GM12878 (cell line): ENCODE measurements at regions of chr1 and their contacts with region 1.

Region 1: GRCh38 chr1:206489980-206490770 is 17.2 kb upstream of the RASSF5 start:
- DNase-seq: no peak
- ATAC-seq: peak; percentile 99
- H3K4me3 ChIP-seq: no peak overlapping the region
- H3K27ac ChIP-seq: no peak overlapping the region
- H3K4me1 ChIP-seq: peaks cover 5% of the 10 kb centered on the region
- H3K27me3 ChIP-seq: no peaks in the 10 kb centered on the region
- CTCF ChIP-seq: peak; percentile 91 to 97 (median 96)
- EP300 ChIP-seq: no peak
- POLR2A ChIP-seq: no peak
- RAD21 ChIP-seq: peak; percentile 97

Region 2: GRCh38 chr1:206030714-206031113 is 459.5 kb before region 1 on chr1:
- CTCF ChIA-PET with region 1: no interaction called
- POLR2A ChIA-PET with region 1: no interaction called
- RAD21 ChIA-PET with region 1: no interaction called
- SMC1A ChIA-PET with region 1: no interaction called
- in situ Hi-C with region 1: no loop called
- intact Hi-C with region 1: no loop called
- DNase-seq: peak; percentile 66
- ATAC-seq: peak; percentile 99
- H3K4me3 ChIP-seq: no peak overlapping the region
- H3K27ac ChIP-seq: no peak overlapping the region
- H3K4me1 ChIP-seq: peaks cover 15% of the 10 kb centered on the region
- H3K27me3 ChIP-seq: no peaks in the 10 kb centered on the region
- CTCF ChIP-seq: peak; percentile 85 to 95 (median 95)
- EP300 ChIP-seq: no peak
- POLR2A ChIP-seq: no peak
- RAD21 ChIP-seq: peak; percentile 92

Region 3: GRCh38 chr1:206435445-206435844 is 54.7 kb before region 1 on chr1:
- CTCF ChIA-PET with region 1: no interaction called
- POLR2A ChIA-PET with region 1: no interaction called
- RAD21 ChIA-PET with region 1: no interaction called
- SMC1A ChIA-PET with region 1: no interaction called
- in situ Hi-C with region 1: no loop called
- intact Hi-C with region 1: no loop called
- DNase-seq: no peak
- ATAC-seq: peak; percentile 45; the same call in 2 of the 3 replicates
- H3K4me3 ChIP-seq: no peak overlapping the region
- H3K27ac ChIP-seq: no peak overlapping the region
- H3K4me1 ChIP-seq: peaks cover 4% of the 10 kb centered on the region; the same call in 1 of the 2 replicates
- H3K27me3 ChIP-seq: no peaks in the 10 kb centered on the region
- CTCF ChIP-seq: no peak
- EP300 ChIP-seq: no peak
- POLR2A ChIP-seq: no peak
- RAD21 ChIP-seq: no peak

Region 4: DNA sequence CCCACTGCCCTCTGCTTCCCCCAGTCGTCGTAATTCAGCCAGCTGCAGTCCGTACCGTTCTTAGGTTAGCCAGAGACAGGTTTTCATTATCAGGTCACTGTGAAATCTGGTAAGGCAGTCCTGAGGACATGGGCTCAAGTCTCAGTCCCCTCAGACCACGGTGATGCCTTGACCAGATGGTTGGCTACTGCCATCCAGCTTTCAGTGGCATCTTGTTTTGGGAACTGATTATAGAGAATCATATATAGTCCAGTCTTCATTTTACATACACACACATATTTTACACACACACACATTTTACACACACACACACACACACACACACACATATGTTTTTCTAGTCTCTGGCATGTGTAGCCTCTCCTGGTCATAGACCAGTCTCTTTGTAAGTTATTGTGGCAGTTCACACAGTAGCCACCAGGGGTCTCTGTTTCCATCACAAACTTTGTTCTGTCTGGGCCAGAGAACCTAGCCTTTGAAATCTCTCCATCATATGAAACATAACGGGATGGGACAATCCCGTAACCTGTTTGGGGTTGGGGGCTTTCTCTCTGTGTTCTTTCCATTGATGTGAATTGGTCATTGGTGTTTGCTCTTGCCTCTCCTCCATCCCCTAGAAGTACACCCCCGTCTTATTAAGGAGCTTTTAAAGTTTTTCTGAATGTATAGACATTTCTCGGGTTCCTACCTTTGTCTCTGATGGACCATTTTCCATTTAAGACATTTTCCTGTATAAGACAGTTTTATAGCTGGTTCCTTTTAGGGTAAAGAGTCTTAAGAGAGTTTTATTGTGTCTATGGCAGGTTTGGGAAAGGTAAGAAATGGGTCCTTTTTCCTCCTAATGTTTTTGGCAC is 28.3 kb before region 1 on chr1:
- CTCF ChIA-PET with region 1: interaction called, 199 read pairs
- POLR2A ChIA-PET with region 1: interaction called, 3 read pairs
- RAD21 ChIA-PET with region 1: interaction called, 3 read pairs
- SMC1A ChIA-PET with region 1: interaction called, 11 read pairs
- in situ Hi-C with region 1: no loop called
- intact Hi-C with region 1: no loop called
- DNase-seq: no peak
- ATAC-seq: peak; percentile 90
- H3K4me3 ChIP-seq: no peak overlapping the region
- H3K27ac ChIP-seq: no peak overlapping the region
- H3K4me1 ChIP-seq: peaks cover 23% of the 10 kb centered on the region
- H3K27me3 ChIP-seq: no peaks in the 10 kb centered on the region
- CTCF ChIP-seq: peak; percentile 76 to 86 (median 84)
- EP300 ChIP-seq: no peak
- POLR2A ChIP-seq: no peak
- RAD21 ChIP-seq: peak; percentile 73

Region 5: GRCh38 chr1:206507284-206508129 is 17.3 kb after region 1 on chr1 and contains the start of gene RASSF5:
- CTCF ChIA-PET with region 1: interaction called, 62 read pairs
- POLR2A ChIA-PET with region 1: interaction called, 60 read pairs
- RAD21 ChIA-PET with region 1: interaction called, 69 read pairs
- SMC1A ChIA-PET with region 1: interaction called, 61 read pairs
- in situ Hi-C with region 1: no loop called
- intact Hi-C with region 1: no loop called
- DNase-seq: no peak
- ATAC-seq: peak; percentile 78
- H3K4me3 ChIP-seq: peak within 1 kb of the TSS; percentile 72
- H3K27ac ChIP-seq: peak within 1 kb of the TSS; percentile 29; the same call in 1 of the 2 replicates
- H3K4me1 ChIP-seq: peaks cover 41% of the 10 kb centered on the region
- H3K27me3 ChIP-seq: no peaks in the 10 kb centered on the region
- CTCF ChIP-seq: no peak
- EP300 ChIP-seq: 0 out of 4 replicates have a peak, but pooled peaks of 1 of the 2 experiments have one; percentile 21
- POLR2A ChIP-seq: peak; percentile 83
- RAD21 ChIP-seq: no peak
- polyA plus RNA-seq, gene RASSF5: 14.0 to 25.4 TPM

Region 6: GRCh38 chr1:206590025-206590758 is 100.0 kb after region 1 on chr1:
- CTCF ChIA-PET with region 1: interaction called, 74 read pairs
- POLR2A ChIA-PET with region 1: no interaction called
- RAD21 ChIA-PET with region 1: interaction called, 9 read pairs
- SMC1A ChIA-PET with region 1: interaction called, 146 read pairs
- in situ Hi-C with region 1: no loop called
- intact Hi-C with region 1: no loop called
- DNase-seq: no peak
- ATAC-seq: peak; percentile 89
- H3K4me3 ChIP-seq: no peak overlapping the region
- H3K27ac ChIP-seq: peak overlapping the region; percentile 34
- H3K4me1 ChIP-seq: peaks cover 6% of the 10 kb centered on the region; the same call in 1 of the 2 replicates
- H3K27me3 ChIP-seq: no peaks in the 10 kb centered on the region
- CTCF ChIP-seq: peak; percentile 38 to 58 (median 42); a peak in 5 of 6 replicates
- EP300 ChIP-seq: no peak
- POLR2A ChIP-seq: peak; percentile 48; the same call in 1 of the 2 replicates
- RAD21 ChIP-seq: 0 out of 2 replicates have a peak, but pooled peaks have one; percentile 26